GM12878 (cell line): ENCODE measurements at regions of chr7 and their contacts with region 1.

Region 1: GRCh38 chr7:20932785-20933461 is 146.2 kb upstream of the SP8 start:
- DNase-seq: no peak
- ATAC-seq: no peak
- H3K4me3 ChIP-seq: no peak overlapping the region
- H3K27ac ChIP-seq: no peak overlapping the region
- H3K4me1 ChIP-seq: no peaks in the 10 kb centered on the region
- H3K27me3 ChIP-seq: no peaks in the 10 kb centered on the region; a peak in 1 of 4 replicates
- CTCF ChIP-seq: no peak
- EP300 ChIP-seq: no peak
- POLR2A ChIP-seq: no peak
- RAD21 ChIP-seq: no peak

Region 2: DNA sequence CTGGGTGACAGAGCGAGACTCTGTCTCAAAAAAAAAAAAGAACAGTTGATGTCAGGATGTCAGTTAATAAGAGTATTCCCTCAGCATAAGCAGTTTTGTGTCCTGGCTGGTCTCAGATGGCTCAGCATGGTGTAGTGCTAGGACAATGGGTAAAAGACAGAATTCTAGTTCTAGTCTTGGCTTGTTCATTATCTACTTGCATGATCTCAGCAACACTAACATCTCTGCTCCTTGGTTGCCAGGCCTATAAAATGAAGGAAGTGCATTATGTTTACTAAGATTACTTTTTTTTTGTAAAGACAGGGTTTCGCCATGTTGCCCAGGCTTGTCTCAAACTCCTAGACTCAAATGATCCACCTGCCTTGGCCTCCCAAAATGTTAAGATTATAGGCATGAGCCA is 61.9 kb before region 1 on chr7:
- CTCF ChIA-PET with region 1: no interaction called
- POLR2A ChIA-PET with region 1: no interaction called
- RAD21 ChIA-PET with region 1: no interaction called
- SMC1A ChIA-PET with region 1: no interaction called
- in situ Hi-C with region 1: no loop called
- intact Hi-C with region 1: loop called (anchors 10 kb)
- DNase-seq: no peak
- ATAC-seq: no peak
- H3K4me3 ChIP-seq: no peak overlapping the region
- H3K27ac ChIP-seq: no peak overlapping the region
- H3K4me1 ChIP-seq: no peaks in the 10 kb centered on the region
- H3K27me3 ChIP-seq: no peaks in the 10 kb centered on the region
- CTCF ChIP-seq: no peak
- EP300 ChIP-seq: no peak
- POLR2A ChIP-seq: no peak
- RAD21 ChIP-seq: no peak